Left colon (tissue), 2 donors: ENCODE measurements at regions of chr3 and their contacts with region 1.

Region 1: DNA sequence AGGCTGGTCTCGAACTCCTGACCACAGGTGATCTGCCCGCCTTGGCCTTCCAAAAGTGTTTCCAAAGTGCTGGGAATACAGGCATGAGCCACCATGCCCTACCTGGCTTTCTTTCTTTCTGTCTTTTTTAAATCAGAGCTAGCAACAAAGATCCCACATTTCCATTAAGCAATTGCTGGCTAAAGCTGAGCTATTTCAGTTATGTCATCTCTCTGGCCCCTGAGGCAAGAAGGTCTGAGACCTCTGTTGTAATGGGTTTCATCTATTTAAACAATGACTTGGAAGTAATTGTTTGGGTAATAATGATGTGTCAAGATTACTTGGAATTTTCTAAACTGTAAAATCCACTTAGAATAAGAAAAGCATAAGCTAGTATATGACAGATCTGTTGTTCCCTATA is 30.2 kb upstream of the CRBN start:
- DNase-seq: no peak
- ATAC-seq: no peak

Region 2: DNA sequence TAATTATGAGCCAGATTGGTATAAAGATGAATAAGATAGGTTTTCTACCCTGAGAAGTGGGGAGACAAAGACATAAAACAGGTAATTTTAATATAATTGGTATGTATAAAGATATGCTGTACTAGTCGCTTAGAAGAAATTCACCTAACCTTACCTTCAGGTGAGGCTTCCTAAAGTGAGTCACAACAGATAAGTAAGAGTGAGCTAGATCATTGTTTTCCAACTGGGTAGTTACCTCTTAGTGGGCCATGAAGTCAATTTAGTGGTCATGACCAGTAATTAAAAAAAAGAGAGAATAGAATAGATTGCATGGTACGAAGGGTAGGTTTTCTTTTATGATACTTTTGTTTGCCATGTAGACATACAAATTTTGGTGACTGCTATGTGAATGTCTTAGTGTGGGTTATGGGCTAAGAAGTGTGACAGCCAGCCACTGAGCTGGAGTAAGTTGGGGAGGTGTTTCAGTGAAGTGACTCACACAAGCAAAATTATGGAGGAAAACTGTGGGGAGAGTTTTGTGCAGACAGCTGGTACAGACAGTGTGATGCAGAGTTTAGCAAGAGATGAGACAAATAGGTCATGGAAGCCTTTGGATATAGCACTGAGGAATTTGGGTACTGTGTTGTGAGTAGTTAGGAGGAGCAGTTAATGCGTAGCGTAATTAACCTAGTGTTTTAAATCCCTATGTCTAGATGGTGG is 74.8 kb before region 1 on chr3:
- intact Hi-C with region 1: no loop called
- DNase-seq: no peak
- ATAC-seq: peak; percentile 15

Region 3: GRCh38 chr3:4279516-4280105 is 1069.9 kb after region 1 on chr3:
- intact Hi-C with region 1: loop called in 1 of 2 experiments (anchors 5 kb)
- DNase-seq: no peak
- ATAC-seq: no peak